ENCODE measurements at regions of chr2 and their contacts with region 1.

Region 1: DNA sequence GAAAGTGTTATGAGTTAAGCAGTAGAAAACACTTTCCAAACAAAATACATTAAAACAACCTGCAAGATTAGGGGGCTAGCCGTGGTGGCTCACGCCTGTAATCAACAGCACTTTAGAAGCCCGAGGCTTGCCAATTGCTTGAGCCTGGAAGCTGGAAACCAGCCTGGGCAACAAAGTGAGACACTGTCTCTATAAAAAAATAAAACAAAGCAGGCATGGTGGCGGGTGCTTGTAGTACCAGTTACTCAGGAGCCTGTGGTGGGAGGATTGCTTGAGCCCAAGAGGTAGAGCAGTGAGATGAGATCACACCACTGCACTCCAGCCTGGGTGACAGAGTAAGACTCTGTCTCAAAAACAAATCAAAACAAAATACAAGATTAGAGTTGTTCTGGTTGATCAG is 208.3 kb downstream of the ERBB4 start:
- DNase-seq: peak; percentile 56
- H3K4me3 ChIP-seq: no peak overlapping the region
- H3K27ac ChIP-seq: peak overlapping the region in 2 of 4 donors; percentile 46 to 47
- H3K4me1 ChIP-seq: peaks cover 0 to 21% (median 5%) of the 10 kb centered on the region in 4 donors
- H3K27me3 ChIP-seq: no peaks in the 10 kb centered on the region
- CTCF ChIP-seq: no peak
- EP300 ChIP-seq: no peak
- POLR2A ChIP-seq: no peak

Region 2: GRCh38 chr2:212274215-212274614 is 56.0 kb before region 1 on chr2:
- intact Hi-C with region 1: no loop called
- DNase-seq: no peak
- H3K4me3 ChIP-seq: no peak overlapping the region
- H3K27ac ChIP-seq: no peak overlapping the region
- H3K4me1 ChIP-seq: no peaks in the 10 kb centered on the region
- H3K27me3 ChIP-seq: no peaks in the 10 kb centered on the region
- CTCF ChIP-seq: no peak
- EP300 ChIP-seq: no peak
- POLR2A ChIP-seq: no peak

Region 3: DNA sequence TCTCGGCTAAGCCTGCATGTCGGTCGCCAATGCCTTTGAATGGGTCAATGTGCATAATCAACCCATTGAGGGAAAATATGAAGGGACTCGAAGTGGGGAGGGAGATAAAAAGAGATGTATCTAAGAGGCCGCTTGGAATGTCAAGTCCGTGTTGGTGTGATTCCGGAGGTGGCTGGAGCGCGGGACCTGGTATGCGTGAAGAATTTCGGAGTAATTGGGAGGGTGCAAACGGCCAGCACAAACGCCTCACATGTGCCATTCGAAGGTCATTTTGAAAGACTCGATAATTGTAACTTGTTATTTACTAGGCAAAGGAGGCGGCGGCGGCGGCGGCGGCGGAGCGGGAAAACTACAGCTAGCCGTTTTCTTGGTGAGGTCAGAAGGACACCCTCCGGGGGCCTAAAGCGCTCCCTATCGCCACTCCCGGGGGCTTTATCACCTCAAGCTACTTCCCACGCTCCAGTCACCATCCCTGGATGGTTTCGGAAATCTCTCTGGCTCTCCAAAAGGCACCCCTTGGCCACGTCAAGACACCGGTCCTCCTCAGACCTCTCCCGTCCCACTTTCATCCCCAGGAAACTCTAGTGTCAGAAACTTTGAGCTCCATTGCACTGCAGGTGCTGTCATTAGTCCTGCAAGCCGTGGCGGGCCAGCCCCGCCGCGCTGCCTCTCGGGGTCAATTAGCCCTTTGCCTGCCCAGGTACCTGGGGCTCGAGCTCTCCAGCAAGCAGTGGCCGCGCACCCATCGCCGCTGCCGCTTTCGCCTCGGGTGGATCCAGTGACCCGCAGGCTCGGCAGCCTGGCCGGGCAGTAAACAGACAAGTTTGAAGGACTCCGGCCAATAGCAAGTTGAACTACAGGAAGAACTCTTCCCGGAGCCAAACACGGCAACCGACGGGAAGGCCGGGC is 206.8 kb after region 1 on chr2:
- intact Hi-C with region 1: loop called (anchors 10 kb)
- DNase-seq: no peak
- H3K4me3 ChIP-seq: peak overlapping the region; percentile 38 to 68 (median 60)
- H3K27ac ChIP-seq: peak overlapping the region in 1 of 4 donors; percentile 48
- H3K4me1 ChIP-seq: peaks cover 0 to 27% (median 21%) of the 10 kb centered on the region in 4 donors
- H3K27me3 ChIP-seq: peaks cover 6 to 32% (median 11%) of the 10 kb centered on the region in 3 donors
- CTCF ChIP-seq: no peak
- EP300 ChIP-seq: no peak
- POLR2A ChIP-seq: no peak

Measured in sigmoid colon (tissue), 7 donors.